T-cell (primary cell): ENCODE measurements at regions of chr11 and their contacts with region 1.

Region 1: DNA sequence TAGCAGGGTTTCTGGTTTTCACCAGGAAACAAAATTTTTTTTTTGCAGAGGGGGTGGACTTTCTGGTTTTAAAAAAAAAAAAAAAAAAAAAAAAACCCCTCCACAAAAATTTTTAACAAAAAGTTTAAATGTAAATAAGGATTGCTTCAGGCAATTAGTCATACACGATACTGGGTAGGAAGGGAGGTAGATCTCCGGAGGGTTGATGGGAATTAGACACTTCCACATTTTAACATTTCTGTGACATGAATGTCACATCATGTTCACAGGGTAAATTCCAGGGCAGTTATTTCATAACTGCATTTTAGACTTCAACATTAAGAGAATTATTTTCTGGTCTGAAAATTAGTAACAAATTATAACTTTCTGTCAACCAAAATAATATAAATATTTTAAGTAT is 15.9 kb downstream of the NUP98 start:
- DNase-seq: no peak
- ATAC-seq: no peak
- H3K4me3 ChIP-seq: no peak overlapping the region
- H3K4me3 Mint-ChIP-seq: no peak overlapping the region
- H3K27ac ChIP-seq: no peak overlapping the region
- H3K27ac Mint-ChIP-seq: peak overlapping the region in 1 of 2 donors; percentile 19
- H3K4me1 ChIP-seq: peaks cover 7 to 28% of the 10 kb centered on the region in 2 experiments
- H3K4me1 Mint-ChIP-seq: peaks cover 46 to 51% (median 48%) of the 10 kb centered on the region in 3 donors
- H3K27me3 ChIP-seq: no peaks in the 10 kb centered on the region
- H3K27me3 Mint-ChIP-seq: no peaks in the 10 kb centered on the region

Region 2: GRCh38 chr11:3665336-3666022 is 115.9 kb before region 1 on chr11:
- CTCF ChIA-PET with region 1: no interaction called
- POLR2A ChIA-PET with region 1: no interaction called
- DNase-seq: no peak
- ATAC-seq: no peak
- H3K4me3 ChIP-seq: no peak overlapping the region
- H3K4me3 Mint-ChIP-seq: no peak overlapping the region
- H3K27ac ChIP-seq: no peak overlapping the region
- H3K27ac Mint-ChIP-seq: no peak overlapping the region
- H3K4me1 ChIP-seq: no peaks in the 10 kb centered on the region
- H3K4me1 Mint-ChIP-seq: no peaks in the 10 kb centered on the region
- H3K27me3 ChIP-seq: no peaks in the 10 kb centered on the region
- H3K27me3 Mint-ChIP-seq: no peaks in the 10 kb centered on the region

Region 3: GRCh38 chr11:3767536-3767935 is 13.9 kb before region 1 on chr11:
- CTCF ChIA-PET with region 1: interaction called, 4 to 7 read pairs
- POLR2A ChIA-PET with region 1: interaction called in 1 of 2 experiments, 10 read pairs
- DNase-seq: no peak
- ATAC-seq: no peak
- H3K4me3 ChIP-seq: no peak overlapping the region
- H3K4me3 Mint-ChIP-seq: no peak overlapping the region
- H3K27ac ChIP-seq: no peak overlapping the region
- H3K27ac Mint-ChIP-seq: no peak overlapping the region
- H3K4me1 ChIP-seq: no peaks in the 10 kb centered on the region
- H3K4me1 Mint-ChIP-seq: no peaks in the 10 kb centered on the region
- H3K27me3 ChIP-seq: no peaks in the 10 kb centered on the region
- H3K27me3 Mint-ChIP-seq: no peaks in the 10 kb centered on the region

Region 4: GRCh38 chr11:3796801-3797328 is 15.4 kb after region 1 on chr11:
- CTCF ChIA-PET with region 1: interaction called in 1 of 2 experiments, 4 read pairs
- POLR2A ChIA-PET with region 1: interaction called, 9 to 12 read pairs
- DNase-seq: no peak
- ATAC-seq: peak; percentile 25 to 47 (median 43)
- H3K4me3 ChIP-seq: peak overlapping the region; percentile 78 to 97
- H3K4me3 Mint-ChIP-seq: peak overlapping the region; percentile 89 to 97 (median 90)
- H3K27ac ChIP-seq: peak overlapping the region; percentile 94
- H3K27ac Mint-ChIP-seq: peak overlapping the region; percentile 91 to 97
- H3K4me1 ChIP-seq: peaks cover 24 to 39% of the 10 kb centered on the region in 2 experiments
- H3K4me1 Mint-ChIP-seq: peaks cover 52 to 53% (median 52%) of the 10 kb centered on the region in 3 donors
- H3K27me3 ChIP-seq: no peaks in the 10 kb centered on the region
- H3K27me3 Mint-ChIP-seq: no peaks in the 10 kb centered on the region

Region 5: GRCh38 chr11:3949125-3949524 is 167.7 kb after region 1 on chr11:
- CTCF ChIA-PET with region 1: interaction called in 1 of 2 experiments, 11 read pairs
- POLR2A ChIA-PET with region 1: no interaction called
- DNase-seq: peak in 10 of 35 experiments; percentile 5 to 52 (median 13)
- ATAC-seq: peak in 2 of 4 experiments; percentile 26 to 39
- H3K4me3 ChIP-seq: peak overlapping the region in 1 of 2 donors; percentile 41
- H3K4me3 Mint-ChIP-seq: peak overlapping the region; percentile 17 to 71 (median 60)
- H3K27ac ChIP-seq: peak overlapping the region; percentile 89
- H3K27ac Mint-ChIP-seq: peak overlapping the region; percentile 94 to 98
- H3K4me1 ChIP-seq: peaks cover 80 to 87% of the 10 kb centered on the region in 2 experiments
- H3K4me1 Mint-ChIP-seq: peaks cover 93 to 97% (median 96%) of the 10 kb centered on the region in 3 donors
- H3K27me3 ChIP-seq: no peaks in the 10 kb centered on the region
- H3K27me3 Mint-ChIP-seq: no peaks in the 10 kb centered on the region

Region 6: GRCh38 chr11:3995949-3996554 is 214.6 kb after region 1 on chr11:
- CTCF ChIA-PET with region 1: no interaction called
- POLR2A ChIA-PET with region 1: no interaction called
- DNase-seq: no peak
- ATAC-seq: no peak
- H3K4me3 ChIP-seq: no peak overlapping the region
- H3K4me3 Mint-ChIP-seq: no peak overlapping the region
- H3K27ac ChIP-seq: no peak overlapping the region
- H3K27ac Mint-ChIP-seq: peak overlapping the region in 1 of 2 donors; percentile 64
- H3K4me1 ChIP-seq: peaks cover 5 to 7% of the 10 kb centered on the region in 2 experiments
- H3K4me1 Mint-ChIP-seq: peaks cover 48 to 68% (median 59%) of the 10 kb centered on the region in 3 donors
- H3K27me3 ChIP-seq: no peaks in the 10 kb centered on the region
- H3K27me3 Mint-ChIP-seq: no peaks in the 10 kb centered on the region

Region 7: DNA sequence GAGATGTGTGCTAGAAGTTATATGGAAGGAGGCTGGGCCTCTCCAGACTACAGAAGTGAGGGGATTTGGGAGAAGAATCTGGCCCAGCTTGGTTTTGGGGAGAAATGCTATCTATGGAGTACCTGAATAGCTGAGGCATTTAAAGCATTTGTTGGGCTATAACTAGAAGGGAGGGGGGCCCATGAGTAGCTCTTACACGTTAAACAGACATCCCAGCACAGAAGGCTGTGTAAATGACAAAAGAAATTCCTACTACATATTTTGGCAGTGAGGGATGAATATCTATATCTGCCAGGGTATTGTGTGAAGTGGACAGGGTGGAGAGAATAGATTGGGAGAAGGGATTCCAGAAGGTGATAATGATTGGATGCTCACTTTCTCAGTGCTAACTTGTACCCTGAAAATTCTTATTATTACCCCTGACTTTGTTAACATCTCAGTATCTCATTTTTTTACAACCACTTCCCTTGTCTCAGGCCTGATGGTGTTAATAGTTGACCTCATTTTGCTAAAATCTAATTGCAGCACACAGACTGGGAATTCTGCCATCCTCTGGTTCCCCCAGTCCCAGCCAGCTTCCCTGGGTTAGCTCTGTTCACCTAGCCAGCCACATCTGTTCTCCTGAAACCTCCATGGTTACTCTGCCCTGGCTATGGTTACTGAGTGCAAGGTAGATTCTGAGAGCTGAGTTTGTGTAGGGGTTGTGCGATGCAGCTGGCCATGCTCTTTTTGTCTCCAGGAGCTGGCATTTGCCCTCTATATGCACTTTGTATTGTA is 284.4 kb after region 1 on chr11:
- CTCF ChIA-PET with region 1: interaction called in 1 of 2 experiments, 11 read pairs
- POLR2A ChIA-PET with region 1: interaction called in 1 of 2 experiments, 6 read pairs
- DNase-seq: no peak
- ATAC-seq: no peak
- H3K4me3 ChIP-seq: no peak overlapping the region
- H3K4me3 Mint-ChIP-seq: no peak overlapping the region
- H3K27ac ChIP-seq: peak overlapping the region; percentile 17
- H3K27ac Mint-ChIP-seq: peak overlapping the region; percentile 84 to 86
- H3K4me1 ChIP-seq: peaks cover 12 to 45% of the 10 kb centered on the region in 2 experiments
- H3K4me1 Mint-ChIP-seq: peaks cover 68 to 71% (median 70%) of the 10 kb centered on the region in 3 donors
- H3K27me3 ChIP-seq: no peaks in the 10 kb centered on the region
- H3K27me3 Mint-ChIP-seq: no peaks in the 10 kb centered on the region

Region 8: GRCh38 chr11:4105916-4106315 is 324.5 kb after region 1 on chr11:
- CTCF ChIA-PET with region 1: no interaction called
- POLR2A ChIA-PET with region 1: interaction called in 1 of 2 experiments, 11 read pairs
- DNase-seq: no peak
- ATAC-seq: no peak
- H3K4me3 ChIP-seq: no peak overlapping the region
- H3K4me3 Mint-ChIP-seq: no peak overlapping the region
- H3K27ac ChIP-seq: no peak overlapping the region
- H3K27ac Mint-ChIP-seq: no peak overlapping the region
- H3K4me1 ChIP-seq: no peaks in the 10 kb centered on the region
- H3K4me1 Mint-ChIP-seq: peaks cover 10 to 15% (median 11%) of the 10 kb centered on the region in 3 donors
- H3K27me3 ChIP-seq: no peaks in the 10 kb centered on the region
- H3K27me3 Mint-ChIP-seq: no peaks in the 10 kb centered on the region